ENCODE measurements at regions of chr2 and their contacts with region 1.

Region 1: DNA sequence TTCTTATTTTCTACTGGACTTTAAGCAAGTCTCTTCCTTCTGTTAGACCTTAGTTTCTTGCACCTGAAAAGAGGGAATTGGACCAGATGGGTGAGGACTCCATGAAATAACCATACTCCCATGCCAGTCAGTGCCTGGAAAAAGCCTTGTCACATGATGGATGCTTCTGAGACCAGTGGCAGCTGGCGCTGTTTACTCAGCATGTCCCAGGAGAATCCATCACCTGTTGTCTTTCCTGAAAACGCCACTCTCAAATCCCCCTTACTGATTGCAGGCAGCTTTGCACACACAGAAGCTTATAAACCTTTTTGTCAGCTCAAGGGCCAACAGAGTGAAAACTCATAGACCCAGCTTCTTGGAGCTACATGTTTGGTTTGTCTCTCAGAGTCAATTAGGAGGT is 117.6 kb downstream of the POLE4 start:
- DNase-seq: no peak
- ATAC-seq: no peak
- H3K4me3 Mint-ChIP-seq: no peak overlapping the region
- H3K27ac Mint-ChIP-seq: no peak overlapping the region
- H3K4me1 Mint-ChIP-seq: no peaks in the 10 kb centered on the region
- H3K27me3 Mint-ChIP-seq: no peaks in the 10 kb centered on the region
- CTCF ChIP-seq: no peak

Region 2: GRCh38 chr2:75064691-75065396 is 11.2 kb before region 1 on chr2:
- CTCF ChIA-PET with region 1: interaction called, 23 read pairs
- POLR2A ChIA-PET with region 1: no interaction called
- intact Hi-C with region 1: no loop called
- DNase-seq: peak; percentile 42
- ATAC-seq: no peak
- H3K4me3 Mint-ChIP-seq: no peak overlapping the region
- H3K27ac Mint-ChIP-seq: no peak overlapping the region
- H3K4me1 Mint-ChIP-seq: no peaks in the 10 kb centered on the region
- H3K27me3 Mint-ChIP-seq: no peaks in the 10 kb centered on the region
- CTCF ChIP-seq: peak; percentile 56

Measured in activated B cell treated with CpG ODN at 0.5 μM for 24 hours (primary cell).